IMR-90 (cell line): ENCODE measurements at regions of chr4 and their contacts with region 1.

Region 1: GRCh38 chr4:112112590-112113136 is 32.6 kb upstream of the FAM241A start:
- DNase-seq: no peak
- ATAC-seq: no peak
- H3K4me3 ChIP-seq: no peak overlapping the region
- H3K27ac ChIP-seq: no peak overlapping the region
- H3K4me1 ChIP-seq: no peaks in the 10 kb centered on the region; the same call in 1 of the 2 replicates
- H3K27me3 ChIP-seq: no peaks in the 10 kb centered on the region; the same call in 1 of the 2 replicates
- CTCF ChIP-seq: no peak
- POLR2A ChIP-seq: no peak
- RAD21 ChIP-seq: no peak

Region 2: DNA sequence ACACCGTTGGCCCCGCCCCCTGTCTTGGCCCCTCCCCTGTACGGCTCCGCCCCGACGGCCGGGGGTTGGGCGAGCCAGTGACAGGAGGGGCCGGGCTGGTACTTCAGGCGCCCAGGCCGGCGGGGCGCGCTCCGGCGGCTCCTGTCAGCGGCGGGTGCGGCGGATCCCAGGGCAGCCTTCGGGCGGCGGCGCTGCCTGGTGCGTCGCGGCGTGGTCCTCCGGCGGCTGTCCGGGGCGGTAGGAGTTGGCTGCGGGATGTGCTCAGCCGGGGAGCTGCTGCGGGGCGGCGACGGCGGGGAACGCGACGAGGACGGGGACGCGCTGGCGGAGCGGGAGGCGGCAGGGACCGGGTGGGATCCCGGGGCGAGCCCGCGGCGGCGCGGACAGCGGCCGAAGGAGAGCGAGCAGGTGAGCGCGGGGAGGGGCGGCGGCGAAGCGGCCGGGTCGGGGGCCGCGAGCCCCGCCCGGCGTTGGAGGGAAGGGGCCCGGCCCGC is 32.7 kb after region 1 on chr4 and contains the start of gene FAM241A:
- CTCF ChIA-PET with region 1: no interaction called
- POLR2A ChIA-PET with region 1: no interaction called
- dilution Hi-C with region 1: no loop called
- in situ Hi-C with region 1: no loop called
- intact Hi-C with region 1: loop called (anchors 1 kb)
- DNase-seq: peak; percentile 64
- ATAC-seq: peak; percentile 100
- H3K4me3 ChIP-seq: peak within 1 kb of the TSS; percentile 65
- H3K27ac ChIP-seq: no peak within 1 kb of the TSS; the same call in 1 of the 2 replicates
- H3K4me1 ChIP-seq: no peaks in the 10 kb centered on the region
- H3K27me3 ChIP-seq: no peaks in the 10 kb centered on the region; the same call in 1 of the 2 replicates
- CTCF ChIP-seq: no peak
- POLR2A ChIP-seq: 0 out of 2 replicates have a peak, but pooled peaks have one; percentile 38
- RAD21 ChIP-seq: no peak
- total RNA-seq, gene FAM241A: under 0.01 and 0.28 TPM in 2 replicates

Region 3: GRCh38 chr4:113636438-113636818 is 1523.8 kb after region 1 on chr4:
- CTCF ChIA-PET with region 1: no interaction called
- POLR2A ChIA-PET with region 1: no interaction called
- dilution Hi-C with region 1: no loop called
- in situ Hi-C with region 1: no loop called
- intact Hi-C with region 1: no loop called
- DNase-seq: no peak
- ATAC-seq: no peak
- H3K4me3 ChIP-seq: no peak overlapping the region
- H3K27ac ChIP-seq: no peak overlapping the region; the same call in 1 of the 2 replicates
- H3K4me1 ChIP-seq: peaks cover 15% of the 10 kb centered on the region
- H3K27me3 ChIP-seq: no peaks in the 10 kb centered on the region
- CTCF ChIP-seq: no peak
- POLR2A ChIP-seq: no peak
- RAD21 ChIP-seq: no peak